ENCODE measurements at regions of chr5 and their contacts with region 1.

Region 1: DNA sequence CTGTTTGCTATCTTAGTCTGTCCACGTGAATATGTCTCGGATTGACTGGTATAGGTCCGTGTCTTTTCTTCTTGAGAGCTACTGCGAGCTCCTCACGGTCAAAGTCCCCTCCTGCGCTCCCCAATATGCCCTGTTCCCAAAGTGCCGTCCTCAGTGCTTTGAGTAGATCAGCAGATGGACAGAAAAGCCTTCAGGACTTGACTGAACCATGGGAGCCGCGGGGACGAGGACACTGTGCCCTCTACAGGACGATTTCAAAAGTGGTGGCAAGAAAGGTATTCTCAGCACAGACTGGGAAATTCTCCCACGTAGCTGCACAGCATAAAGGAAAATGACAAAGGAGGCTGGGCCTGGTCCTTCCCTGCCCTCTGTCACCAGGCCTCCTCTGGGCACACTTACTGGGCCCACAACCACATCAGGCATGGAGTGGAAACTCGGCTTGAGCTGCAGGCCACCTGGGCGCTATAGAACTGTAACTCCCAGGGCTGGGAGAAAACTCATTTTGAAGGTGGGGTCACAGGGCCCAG is 16.6 kb upstream of the MTMR12 start:
- DNase-seq: peak; percentile 80
- ATAC-seq: peak; percentile 96 to 98
- H3K4me3 ChIP-seq: no peak overlapping the region
- H3K27ac ChIP-seq: 0 out of 6 replicates have a peak overlapping the region, but pooled peaks of 1 of the 2 experiments have one; percentile 34
- H3K4me1 ChIP-seq: peaks cover 3% of the 10 kb centered on the region; the same call in 1 of the 3 replicates
- CTCF ChIP-seq: peak; percentile 79
- EP300 ChIP-seq: no peak
- POLR2A ChIP-seq: no peak
- RAD21 ChIP-seq: peak; percentile 86 to 93

Region 2: GRCh38 chr5:32223946-32224608 is 105.3 kb before region 1 on chr5:
- CTCF ChIA-PET with region 1: interaction called, 21 read pairs
- POLR2A ChIA-PET with region 1: no interaction called
- DNase-seq: peak; percentile 65 to 85
- ATAC-seq: peak; percentile 72 to 96
- H3K4me3 ChIP-seq: no peak overlapping the region
- H3K27ac ChIP-seq: peak overlapping the region; percentile 84 to 87
- H3K4me1 ChIP-seq: peaks cover 39% of the 10 kb centered on the region
- CTCF ChIP-seq: no peak
- EP300 ChIP-seq: no peak
- POLR2A ChIP-seq: no peak
- RAD21 ChIP-seq: no peak; a peak in 1 of 5 replicates

Region 3: DNA sequence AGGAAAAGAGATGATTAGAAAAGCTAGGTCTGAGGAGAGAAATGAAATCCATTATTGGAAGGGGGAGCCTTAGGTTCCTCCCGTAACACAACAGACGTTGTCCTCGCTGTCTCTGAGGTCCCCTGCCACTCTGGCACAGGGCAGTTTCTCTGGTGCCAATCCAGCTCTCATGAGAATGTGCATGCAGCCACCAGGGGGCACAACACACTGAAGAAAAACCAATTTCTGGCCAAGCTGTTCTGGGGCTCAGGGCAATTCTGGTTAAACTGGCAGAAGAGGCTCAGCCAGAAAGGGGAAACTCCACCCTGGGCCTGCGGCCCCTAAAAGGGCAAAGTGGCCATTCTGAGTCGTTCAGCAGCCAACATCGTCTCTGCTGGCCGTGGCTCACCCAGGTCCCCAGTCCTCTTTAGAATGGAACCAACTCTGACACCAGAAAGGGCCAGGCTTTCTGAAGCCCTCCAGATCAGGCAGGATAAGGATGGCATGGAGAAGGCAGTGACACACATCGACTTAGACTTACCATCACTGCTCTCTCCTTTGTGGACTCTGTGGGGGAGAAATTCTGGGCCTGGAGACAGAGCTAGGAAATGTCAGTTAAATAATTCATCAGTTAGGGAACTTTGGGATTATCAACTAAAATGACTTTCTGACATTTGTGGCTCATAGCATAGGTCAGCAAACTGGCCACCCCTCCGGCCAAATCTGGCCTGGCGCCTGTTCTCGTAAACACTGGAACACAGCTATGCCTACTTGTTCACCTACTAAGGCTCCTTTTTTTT is 96.7 kb before region 1 on chr5:
- CTCF ChIA-PET with region 1: interaction called, 110 read pairs
- POLR2A ChIA-PET with region 1: interaction called, 4 read pairs
- DNase-seq: peak; percentile 61 to 73
- ATAC-seq: peak; percentile 84 to 94
- H3K4me3 ChIP-seq: no peak overlapping the region
- H3K27ac ChIP-seq: peak overlapping the region; percentile 66 to 79
- H3K4me1 ChIP-seq: peaks cover 39% of the 10 kb centered on the region
- CTCF ChIP-seq: peak; percentile 85
- EP300 ChIP-seq: no peak
- POLR2A ChIP-seq: no peak
- RAD21 ChIP-seq: peak; percentile 81 to 86

Region 4: DNA sequence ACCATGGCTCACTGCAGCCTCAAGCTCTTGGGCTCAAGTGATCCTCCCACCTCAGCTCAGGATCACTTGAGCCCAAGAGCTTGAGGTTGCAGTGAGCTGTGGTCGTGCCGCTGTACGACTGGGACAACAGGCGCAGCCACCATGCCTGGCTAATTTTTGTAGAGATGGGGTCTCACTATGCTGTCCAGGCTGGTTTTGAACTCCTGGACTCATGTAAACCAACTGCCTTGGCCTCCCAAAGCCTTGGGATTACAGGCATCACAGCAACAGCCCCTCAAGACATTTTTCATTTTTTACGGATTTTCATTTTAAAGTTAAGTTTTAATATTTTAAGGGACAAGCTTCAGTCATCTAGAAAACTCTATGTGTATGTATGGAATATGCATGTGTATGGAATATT is 36.3 kb after region 1 on chr5:
- CTCF ChIA-PET with region 1: interaction called, 11 read pairs
- POLR2A ChIA-PET with region 1: no interaction called
- DNase-seq: no peak
- ATAC-seq: no peak
- H3K4me3 ChIP-seq: no peak overlapping the region
- H3K27ac ChIP-seq: no peak overlapping the region
- H3K4me1 ChIP-seq: no peaks in the 10 kb centered on the region
- CTCF ChIP-seq: no peak
- EP300 ChIP-seq: no peak
- POLR2A ChIP-seq: no peak
- RAD21 ChIP-seq: no peak

Region 5: DNA sequence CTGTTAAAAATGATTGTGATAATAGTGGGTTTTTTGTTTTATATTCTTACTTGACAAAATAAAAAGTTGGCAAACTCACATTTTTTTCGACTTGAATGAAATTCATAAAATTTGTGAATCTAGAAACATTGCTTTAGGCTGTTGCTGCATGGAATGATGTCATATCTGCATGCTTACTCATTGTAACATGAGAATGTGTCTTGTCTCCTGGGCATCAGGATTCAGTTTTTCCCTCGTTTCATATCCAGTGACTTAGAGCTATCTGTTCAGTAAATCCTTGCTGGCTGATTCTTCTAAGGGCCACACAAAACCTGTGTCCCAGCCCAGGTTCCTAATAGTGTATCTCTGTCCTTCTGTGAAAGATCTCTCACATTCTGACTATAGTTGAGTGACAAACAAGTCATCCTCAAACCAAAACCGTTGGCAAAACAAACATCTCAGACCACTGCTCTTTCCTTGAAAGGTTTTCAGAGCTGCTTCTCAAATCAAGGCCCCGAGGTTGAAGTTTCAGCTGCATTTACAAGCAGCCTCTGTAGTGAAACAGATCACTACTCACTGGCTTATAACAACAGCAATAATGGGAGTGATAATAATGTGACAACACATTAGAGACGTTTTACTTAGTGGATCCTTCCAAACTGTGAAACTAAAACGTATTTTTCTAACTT is 476.7 kb after region 1 on chr5:
- CTCF ChIA-PET with region 1: no interaction called
- POLR2A ChIA-PET with region 1: no interaction called
- DNase-seq: peak; percentile 51 to 75
- ATAC-seq: peak; percentile 92 to 94
- H3K4me3 ChIP-seq: no peak overlapping the region
- H3K27ac ChIP-seq: peak overlapping the region; percentile 77 to 89
- H3K4me1 ChIP-seq: peaks cover 21% of the 10 kb centered on the region
- CTCF ChIP-seq: no peak
- EP300 ChIP-seq: no peak
- POLR2A ChIP-seq: no peak
- RAD21 ChIP-seq: no peak; a peak in 1 of 5 replicates